Activated CD8-positive, alpha-beta T cell treated with anti-CD3 and anti-CD28 coated beads for 36 hours (primary cell): ENCODE measurements at regions of chr1 and their contacts with region 1.

Region 1: GRCh38 chr1:186315570-186315969 is 59.5 kb downstream of the TPR start:
- DNase-seq: no peak
- ATAC-seq: no peak
- H3K4me3 Mint-ChIP-seq: no peak overlapping the region
- H3K27ac Mint-ChIP-seq: no peak overlapping the region
- H3K4me1 Mint-ChIP-seq: no peaks in the 10 kb centered on the region
- H3K27me3 Mint-ChIP-seq: no peaks in the 10 kb centered on the region
- CTCF ChIP-seq: no peak

Region 2: DNA sequence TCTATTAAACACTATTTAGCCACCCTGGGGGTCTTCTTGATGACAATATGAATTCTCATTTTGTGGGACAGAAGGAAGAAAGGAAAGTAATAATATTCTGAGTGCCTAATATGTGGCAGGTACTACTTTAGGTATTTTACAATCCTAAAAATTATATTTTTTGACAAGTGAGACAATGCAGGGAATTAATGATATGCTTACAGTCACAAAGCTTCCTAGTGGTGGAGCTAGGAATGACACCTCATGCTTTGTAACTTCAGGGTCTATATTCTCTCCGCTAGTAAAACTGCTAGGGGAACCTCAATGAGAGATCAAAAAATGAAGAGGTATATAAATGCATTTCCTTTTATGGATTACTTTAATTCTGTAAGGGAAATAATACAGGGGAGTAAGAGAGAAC is 15.2 kb after region 1 on chr1:
- CTCF ChIA-PET with region 1: interaction called, 15 read pairs
- POLR2A ChIA-PET with region 1: interaction called, 3 read pairs
- intact Hi-C with region 1: no loop called
- DNase-seq: no peak
- ATAC-seq: no peak
- H3K4me3 Mint-ChIP-seq: no peak overlapping the region
- H3K27ac Mint-ChIP-seq: no peak overlapping the region
- H3K4me1 Mint-ChIP-seq: peaks cover 5% of the 10 kb centered on the region
- H3K27me3 Mint-ChIP-seq: no peaks in the 10 kb centered on the region
- CTCF ChIP-seq: peak; percentile 60